Activated naive CD4-positive, alpha-beta T cell treated with anti-CD3 and anti-CD28 coated beads, Interleukin-2, amount 10 ng/mL, durations not matched to agents 7 days and 5 days (primary cell): ENCODE measurements at regions of chr12 and their contacts with region 1.

Region 1: GRCh38 chr12:53379389-53380103 is 430 bp upstream of the SP1 start:
- DNase-seq: peak; percentile 100
- H3K4me3 Mint-ChIP-seq: no peak overlapping the region
- H3K27ac Mint-ChIP-seq: no peak overlapping the region
- H3K4me1 Mint-ChIP-seq: peaks cover 43% of the 10 kb centered on the region
- H3K27me3 Mint-ChIP-seq: no peaks in the 10 kb centered on the region

Region 2: DNA sequence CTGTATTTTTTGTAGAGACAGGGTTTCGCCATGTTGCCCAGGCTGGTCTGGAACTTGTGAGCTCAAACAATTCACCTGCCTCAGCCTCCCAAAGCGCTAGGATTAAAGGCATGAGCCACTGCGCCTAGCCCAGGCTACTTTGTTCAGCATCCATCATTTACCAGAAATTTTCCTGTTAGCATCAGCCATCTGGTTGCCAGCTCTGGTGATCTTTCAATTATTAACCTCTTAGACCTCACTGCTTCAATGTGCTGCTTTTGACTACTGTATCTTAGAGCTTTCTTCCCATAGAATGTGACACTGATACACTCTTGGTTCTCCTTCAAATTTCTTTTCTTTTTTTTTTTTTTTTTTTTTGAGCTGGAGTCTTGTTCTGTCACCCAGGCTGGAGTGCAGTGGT is 38.7 kb after region 1 on chr12:
- CTCF ChIA-PET with region 1: interaction called, 29 read pairs
- DNase-seq: no peak
- H3K4me3 Mint-ChIP-seq: no peak overlapping the region
- H3K27ac Mint-ChIP-seq: no peak overlapping the region
- H3K4me1 Mint-ChIP-seq: peaks cover 26% of the 10 kb centered on the region
- H3K27me3 Mint-ChIP-seq: no peaks in the 10 kb centered on the region